Activated CD4-positive, alpha-beta T cell treated with anti-CD3 and anti-CD28 coated beads, Interleukin-2, amount 10 ng/mL, durations not matched to agents 24 days and 14 days (primary cell): ENCODE measurements at regions of chr1 and their contacts with region 1.

Region 1: DNA sequence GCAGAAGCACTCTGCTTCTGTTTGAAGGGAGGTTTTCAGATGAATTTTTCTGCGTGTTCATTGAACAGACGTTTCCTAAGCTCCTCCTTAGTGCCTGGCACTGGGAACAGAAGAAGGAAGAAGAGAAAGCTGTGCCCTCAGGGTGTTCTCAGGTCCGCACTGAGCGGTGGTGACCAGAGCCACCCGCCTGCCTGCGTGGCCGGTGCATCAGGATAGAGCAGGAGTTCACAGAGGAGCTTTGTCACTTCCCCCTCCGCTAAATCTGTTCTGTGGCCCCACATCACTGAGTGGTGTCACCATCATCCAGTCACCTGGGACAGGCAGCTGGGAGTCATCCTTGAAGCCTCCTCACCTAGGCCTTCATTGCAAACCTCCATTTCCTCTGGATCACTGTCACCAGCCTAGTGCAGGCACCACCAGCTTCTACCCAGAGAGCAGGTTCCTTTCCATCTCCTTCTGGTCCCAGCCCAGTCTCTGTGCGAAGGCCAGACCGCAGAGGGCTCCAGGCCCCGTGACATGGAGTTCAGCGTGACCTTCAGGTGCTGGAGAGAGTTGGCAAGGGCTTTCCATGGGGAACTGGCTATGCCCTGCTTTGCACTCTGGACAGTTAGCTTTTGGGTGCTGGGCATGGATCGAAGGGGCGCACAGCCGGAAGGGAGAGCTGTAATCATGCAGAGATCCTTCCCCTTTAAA is 21.7 kb downstream of the PARK7 start:
- DNase-seq: no peak
- H3K4me3 Mint-ChIP-seq: no peak overlapping the region
- H3K27ac Mint-ChIP-seq: no peak overlapping the region
- H3K4me1 Mint-ChIP-seq: peaks cover 9% of the 10 kb centered on the region
- H3K27me3 Mint-ChIP-seq: no peaks in the 10 kb centered on the region

Region 2: GRCh38 chr1:8026153-8026975 is 43.1 kb after region 1 on chr1 and contains the start of gene ERRFI1:
- intact Hi-C with region 1: loop called (anchors 1 kb)
- DNase-seq: peak; percentile 97
- H3K4me3 Mint-ChIP-seq: peak within 1 kb of the TSS; percentile 89
- H3K27ac Mint-ChIP-seq: peak within 1 kb of the TSS; percentile 76
- H3K4me1 Mint-ChIP-seq: peaks cover 10% of the 10 kb centered on the region
- H3K27me3 Mint-ChIP-seq: peaks cover 63% of the 10 kb centered on the region
- total RNA-seq, gene ERRFI1: 2.0 TPM in 2 replicates

Region 3: DNA sequence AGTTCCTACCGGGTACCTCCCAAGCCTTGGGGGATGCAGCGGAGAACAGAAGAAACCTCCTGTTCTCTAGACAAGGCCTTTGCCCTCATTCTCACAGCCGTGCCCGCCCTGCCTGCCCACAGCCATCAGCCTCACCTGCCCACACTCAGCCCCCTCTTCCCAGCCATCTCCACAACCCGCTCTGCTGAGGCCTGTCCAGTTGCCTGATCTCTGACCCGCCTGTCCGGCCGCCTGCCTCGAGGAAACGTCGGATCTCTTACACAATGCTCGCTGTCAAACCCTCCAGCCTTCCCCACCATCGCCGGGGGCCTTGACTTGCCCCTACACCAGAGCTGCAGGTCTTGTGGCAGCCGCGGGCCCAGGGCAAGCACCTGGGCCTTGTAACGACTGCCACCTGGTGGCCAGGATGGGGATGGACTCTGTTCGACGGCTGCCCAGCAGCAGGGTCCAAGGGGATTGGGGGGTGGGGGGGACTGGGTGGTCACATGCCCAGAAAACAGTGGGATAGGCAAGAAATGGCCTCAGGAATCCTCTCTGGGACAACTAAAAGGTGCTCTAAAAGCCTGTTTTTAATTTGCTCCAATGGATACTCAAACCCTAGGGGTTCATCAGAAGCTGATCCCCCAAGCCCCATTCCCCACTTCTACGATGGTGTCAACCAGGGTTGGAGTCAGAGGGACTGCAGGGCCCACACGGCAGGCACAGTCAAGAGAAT is 365.7 kb after region 1 on chr1:
- intact Hi-C with region 1: loop called (anchors 1 kb)
- DNase-seq: peak; percentile 90
- H3K4me3 Mint-ChIP-seq: no peak overlapping the region
- H3K27ac Mint-ChIP-seq: no peak overlapping the region
- H3K4me1 Mint-ChIP-seq: no peaks in the 10 kb centered on the region
- H3K27me3 Mint-ChIP-seq: no peaks in the 10 kb centered on the region